ENCODE measurements at regions of chr17 and their contacts with region 1.

Region 1: DNA sequence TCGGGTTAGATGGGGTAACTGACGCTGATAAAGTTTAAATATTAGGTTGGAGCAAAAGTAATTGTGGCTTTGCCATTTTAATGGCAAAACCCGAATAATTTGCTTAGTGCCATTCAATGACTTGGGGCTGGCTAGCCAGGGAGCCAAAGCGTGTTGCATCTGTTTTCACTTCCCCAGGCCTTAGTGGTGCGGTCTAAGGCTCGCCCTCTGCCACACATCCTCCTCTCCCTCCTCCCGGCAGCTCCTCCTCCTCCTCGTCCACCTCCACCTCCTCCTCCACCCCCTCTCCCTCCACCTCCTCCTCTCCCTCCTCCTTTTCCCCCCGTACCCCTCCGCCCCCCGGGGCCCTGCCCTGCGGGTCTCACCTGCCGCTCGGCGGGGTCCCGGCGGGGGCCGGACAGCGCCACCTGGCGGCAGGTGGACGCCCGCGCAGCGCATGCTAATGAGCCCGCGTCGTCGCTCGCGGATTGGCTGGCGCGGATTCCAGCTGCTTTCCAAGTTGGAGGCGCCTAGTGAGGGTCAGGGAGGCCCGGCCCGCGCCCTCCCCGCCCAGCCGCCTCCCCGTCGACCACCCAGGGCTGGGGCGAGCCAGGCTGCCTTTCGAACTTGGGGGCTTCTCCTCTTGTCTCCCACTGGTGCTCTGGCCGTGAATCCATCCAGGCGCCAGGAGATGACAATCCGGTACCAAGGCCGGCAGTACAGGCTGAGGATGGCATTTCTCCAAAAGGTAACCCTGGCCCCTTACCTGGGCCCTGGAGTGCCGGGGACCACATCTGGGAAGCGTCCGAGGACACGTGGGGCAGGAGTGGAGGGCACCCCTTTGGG is 36.6 kb upstream of the RGS9 start:
- DNase-seq: peak; percentile 75 to 87
- H3K4me3 ChIP-seq: peak overlapping the region; percentile 35 to 74 (median 54)
- H3K27ac ChIP-seq: peak overlapping the region; percentile 84 to 89
- H3K4me1 ChIP-seq: peaks cover 4 to 5% of the 10 kb centered on the region in 2 donors
- H3K27me3 ChIP-seq: no peaks in the 10 kb centered on the region
- CTCF ChIP-seq: peak; percentile 90 to 98 (median 97)
- POLR2A ChIP-seq: no peak

Region 2: GRCh38 chr17:64968652-64969501 is 131.7 kb before region 1 on chr17:
- intact Hi-C with region 1: loop called (anchors 10 kb)
- DNase-seq: no peak
- H3K4me3 ChIP-seq: no peak overlapping the region
- H3K27ac ChIP-seq: no peak overlapping the region
- H3K4me1 ChIP-seq: no peaks in the 10 kb centered on the region
- H3K27me3 ChIP-seq: no peaks in the 10 kb centered on the region
- CTCF ChIP-seq: no peak
- POLR2A ChIP-seq: no peak

Region 3: GRCh38 chr17:65055348-65056261 is 44.9 kb before region 1 on chr17:
- intact Hi-C with region 1: loop called (anchors 10 kb)
- DNase-seq: peak; percentile 64 to 68
- H3K4me3 ChIP-seq: peak overlapping the region; percentile 82 to 96 (median 94)
- H3K27ac ChIP-seq: peak overlapping the region; percentile 98 to 100
- H3K4me1 ChIP-seq: peaks cover 0 to 26% of the 10 kb centered on the region in 2 donors
- H3K27me3 ChIP-seq: no peaks in the 10 kb centered on the region
- CTCF ChIP-seq: no peak
- POLR2A ChIP-seq: no peak

Region 4: DNA sequence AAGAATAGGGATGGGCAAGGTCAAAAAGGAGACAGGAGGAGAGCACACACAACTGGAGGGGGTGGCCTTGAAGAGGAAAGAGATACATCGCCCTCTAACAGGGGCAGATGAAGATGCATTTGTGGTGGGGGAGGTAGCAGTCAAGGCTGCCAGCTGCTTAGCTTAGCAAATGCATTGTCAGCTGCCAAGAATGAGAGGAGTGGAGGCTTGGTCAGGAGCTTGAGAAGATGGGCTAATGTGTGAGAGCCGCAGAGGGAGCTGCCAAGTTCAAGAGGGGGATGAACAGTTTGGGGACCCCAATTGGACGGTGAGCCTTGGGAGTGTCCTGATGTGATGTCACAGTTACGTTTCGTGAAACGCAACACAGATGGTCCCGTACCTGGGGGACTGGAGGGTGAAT is 15.1 kb before region 1 on chr17:
- intact Hi-C with region 1: no loop called
- DNase-seq: no peak
- H3K4me3 ChIP-seq: no peak overlapping the region
- H3K27ac ChIP-seq: no peak overlapping the region
- H3K4me1 ChIP-seq: peaks cover 0 to 4% of the 10 kb centered on the region in 2 donors
- H3K27me3 ChIP-seq: no peaks in the 10 kb centered on the region
- CTCF ChIP-seq: no peak
- POLR2A ChIP-seq: no peak

Measured in breast epithelium (tissue), 4 donors.